AG04449 (cell line): ENCODE measurements at regions of chr1 and their contacts with region 1.

Region 1: GRCh38 chr1:70205434-70206118 is at the start of gene LRRC40:
- DNase-seq: peak; percentile 54
- H3K4me3 ChIP-seq: peak within 1 kb of the TSS; percentile 97
- CTCF ChIP-seq: no peak

Region 2: GRCh38 chr1:70221241-70222121 is 15.9 kb after region 1 on chr1 and contains the start of gene SRSF11:
- CTCF ChIA-PET with region 1: interaction called, 4 read pairs
- POLR2A ChIA-PET with region 1: interaction called, 15 read pairs
- DNase-seq: peak; percentile 45
- H3K4me3 ChIP-seq: peak within 1 kb of the TSS; percentile 74
- CTCF ChIP-seq: no peak